A549 (cell line): ENCODE measurements at regions of chr17 and their contacts with region 1.

Region 1: DNA sequence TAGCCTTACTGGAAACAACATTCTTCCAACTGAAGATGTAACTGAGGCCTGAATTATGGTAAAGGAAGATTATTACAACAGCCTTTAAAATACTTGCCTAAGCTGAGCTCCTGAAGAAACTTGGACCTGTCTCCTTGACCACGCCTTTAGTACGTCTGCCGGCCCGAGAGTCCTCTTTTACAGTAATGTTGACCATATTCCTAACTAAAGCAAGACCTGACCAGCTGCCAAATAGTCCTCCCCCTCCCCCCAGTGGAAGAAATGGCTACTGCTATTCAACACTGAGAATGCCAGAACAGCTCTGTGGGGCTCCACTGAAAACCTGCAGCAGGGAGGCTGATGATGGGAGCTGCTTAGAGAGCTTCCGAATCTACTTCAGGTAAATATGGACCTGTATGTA is 12.6 kb upstream of the FOXJ1 start:
- DNase-seq: no peak
- ATAC-seq: peak in 1 of 2 experiments; percentile 48; a peak in 3 of 6 replicates
- H3K4me3 ChIP-seq: no peak overlapping the region
- H3K27ac ChIP-seq: no peak overlapping the region
- H3K4me1 ChIP-seq: 0 out of 3 replicates have a peak, but pooled peaks cover 2% of the 10 kb centered on the region
- CTCF ChIP-seq: no peak
- EP300 ChIP-seq: no peak
- POLR2A ChIP-seq: no peak
- RAD21 ChIP-seq: no peak

Region 2: GRCh38 chr17:76036497-76037261 is 117.0 kb before region 1 on chr17:
- CTCF ChIA-PET with region 1: no interaction called
- POLR2A ChIA-PET with region 1: no interaction called
- DNase-seq: no peak
- ATAC-seq: no peak
- H3K4me3 ChIP-seq: no peak overlapping the region
- H3K27ac ChIP-seq: no peak overlapping the region
- H3K4me1 ChIP-seq: no peaks in the 10 kb centered on the region
- CTCF ChIP-seq: no peak
- EP300 ChIP-seq: no peak
- POLR2A ChIP-seq: peak; percentile 8; the same call in 1 of the 2 replicates
- RAD21 ChIP-seq: no peak

Region 3: DNA sequence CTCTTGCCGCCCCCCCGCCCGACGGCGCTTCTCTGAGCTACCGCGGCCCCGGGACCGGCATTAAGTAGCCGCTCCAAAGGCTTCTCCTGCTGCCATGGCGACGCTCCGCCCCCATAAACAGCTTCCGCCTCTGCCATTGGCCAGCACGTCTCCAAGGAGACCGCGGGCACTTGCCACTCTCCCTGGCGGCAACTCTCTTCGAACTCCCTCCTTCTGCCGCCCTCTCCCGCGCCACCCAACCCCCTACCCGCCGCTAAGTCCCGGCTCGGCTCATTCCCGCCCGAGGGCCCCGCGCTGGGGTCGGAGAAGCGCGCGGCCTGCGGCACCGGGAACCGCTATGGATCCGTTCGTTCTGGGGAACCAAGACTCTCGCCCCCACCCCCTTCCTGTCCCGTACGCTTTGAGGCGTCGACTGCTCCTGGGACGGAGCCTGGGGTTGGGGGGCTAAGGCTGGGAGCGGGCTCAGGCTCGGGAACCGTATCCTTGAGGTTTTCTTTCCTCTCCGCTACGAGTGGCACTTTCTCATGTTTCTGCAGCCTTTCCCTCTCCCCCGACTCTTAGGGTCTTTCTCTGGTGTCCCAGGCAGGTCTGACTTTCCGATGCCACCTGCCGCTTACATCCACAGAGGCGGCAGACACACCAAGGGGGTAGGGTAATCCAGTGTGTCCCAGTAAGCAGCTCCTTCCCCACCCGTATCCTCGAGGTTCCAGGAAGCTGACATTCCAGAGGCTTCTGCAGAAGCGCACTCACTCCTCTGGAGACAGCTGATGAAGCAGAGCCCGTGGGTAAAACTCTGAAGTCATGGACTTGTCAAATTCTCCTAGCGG is 12.2 kb before region 1 on chr17 and contains the start of gene FOXJ1:
- CTCF ChIA-PET with region 1: interaction called, 29 read pairs
- POLR2A ChIA-PET with region 1: no interaction called
- DNase-seq: peak; percentile 91 to 99
- ATAC-seq: peak; percentile 77 to 92
- H3K4me3 ChIP-seq: peak within 1 kb of the TSS; percentile 47
- H3K27ac ChIP-seq: peak within 1 kb of the TSS in 1 of 2 experiments; percentile 73; a peak in 4 of 6 replicates
- H3K4me1 ChIP-seq: peaks cover 35% of the 10 kb centered on the region
- CTCF ChIP-seq: no peak
- EP300 ChIP-seq: no peak
- POLR2A ChIP-seq: no peak
- RAD21 ChIP-seq: no peak
- polyA plus RNA-seq, gene FOXJ1: 0.09 TPM in 2 replicates

Region 4: GRCh38 chr17:76166168-76166567 is 12.5 kb after region 1 on chr17:
- CTCF ChIA-PET with region 1: interaction called, 23 read pairs
- POLR2A ChIA-PET with region 1: no interaction called
- DNase-seq: no peak
- ATAC-seq: no peak
- H3K4me3 ChIP-seq: no peak overlapping the region
- H3K27ac ChIP-seq: no peak overlapping the region
- H3K4me1 ChIP-seq: no peaks in the 10 kb centered on the region
- CTCF ChIP-seq: no peak
- EP300 ChIP-seq: no peak
- POLR2A ChIP-seq: no peak
- RAD21 ChIP-seq: no peak